ENCODE measurements at regions of chr18 and their contacts with region 1.

Region 1: GRCh38 chr18:26780520-26781325 is 84.8 kb downstream of the AQP4 start:
- DNase-seq: no peak
- H3K4me3 ChIP-seq: no peak overlapping the region
- H3K27ac ChIP-seq: no peak overlapping the region
- H3K4me1 ChIP-seq: no peaks in the 10 kb centered on the region
- H3K27me3 ChIP-seq: peaks cover 3% of the 10 kb centered on the region
- CTCF ChIP-seq: no peak
- EP300 ChIP-seq: no peak
- POLR2A ChIP-seq: no peak

Region 2: GRCh38 chr18:26370037-26370436 is 410.7 kb before region 1 on chr18:
- in situ Hi-C with region 1: no loop called
- intact Hi-C with region 1: loop called (anchors 10 kb)
- DNase-seq: no peak
- H3K4me3 ChIP-seq: no peak overlapping the region
- H3K27ac ChIP-seq: no peak overlapping the region
- H3K4me1 ChIP-seq: no peaks in the 10 kb centered on the region
- H3K27me3 ChIP-seq: no peaks in the 10 kb centered on the region
- CTCF ChIP-seq: no peak
- EP300 ChIP-seq: no peak
- POLR2A ChIP-seq: no peak

Region 3: DNA sequence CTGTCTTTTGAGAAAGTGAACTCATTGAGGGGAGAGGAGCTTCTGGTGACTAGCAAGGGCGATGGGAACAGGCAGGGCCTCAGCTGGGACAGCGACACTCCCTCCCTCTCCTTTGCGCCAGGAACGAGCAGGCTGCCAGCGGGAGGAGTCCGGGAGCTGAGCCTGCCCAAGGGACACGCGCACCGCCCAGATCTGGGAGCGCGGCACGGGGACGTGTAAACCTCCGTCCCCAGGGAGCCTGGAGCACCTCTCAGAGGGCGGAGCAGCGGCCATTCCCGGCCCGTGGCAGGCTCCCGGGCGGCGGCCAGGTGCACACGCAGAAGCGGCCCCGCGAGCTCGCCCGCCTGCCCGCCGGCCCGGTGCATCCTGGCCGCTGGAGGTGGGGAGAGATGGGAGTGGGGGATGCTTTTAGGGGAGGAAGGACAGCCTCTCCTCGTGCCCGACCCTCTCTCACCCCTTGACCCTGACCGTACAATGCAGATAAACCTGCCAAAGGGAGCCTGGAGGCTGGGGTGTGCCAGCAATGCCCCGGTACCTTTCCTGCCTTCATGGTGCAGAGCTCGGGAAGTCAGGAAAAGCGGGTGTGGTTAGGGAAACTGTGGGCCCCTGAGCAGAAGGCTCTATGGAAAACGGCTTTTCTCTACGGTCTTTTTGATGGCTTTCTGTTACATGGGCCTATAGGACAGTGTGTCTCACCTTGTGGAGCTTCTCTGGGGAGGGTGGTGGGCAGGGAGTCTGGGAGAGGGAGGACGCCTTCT is 82.6 kb after region 1 on chr18:
- in situ Hi-C with region 1: no loop called
- intact Hi-C with region 1: no loop called
- DNase-seq: peak; percentile 74
- H3K4me3 ChIP-seq: peak overlapping the region in 3 of 4 donors; percentile 3 to 42 (median 27)
- H3K27ac ChIP-seq: no peak overlapping the region
- H3K4me1 ChIP-seq: peaks cover 0 to 8% (median 4%) of the 10 kb centered on the region in 4 donors
- H3K27me3 ChIP-seq: peaks cover 25% of the 10 kb centered on the region
- CTCF ChIP-seq: no peak
- EP300 ChIP-seq: no peak
- POLR2A ChIP-seq: no peak

Measured in transverse colon (tissue), 4 donors.